ENCODE measurements at regions of chr3 and their contacts with region 1.

Region 1: GRCh38 chr3:32238453-32239306 is at the start of gene CMTM8:
- DNase-seq: peak; percentile 51
- H3K4me3 ChIP-seq: peak within 1 kb of the TSS; percentile 67 to 78 (median 70)
- H3K27ac ChIP-seq: no peak within 1 kb of the TSS
- H3K4me1 ChIP-seq: peaks cover 15% of the 10 kb centered on the region
- H3K27me3 ChIP-seq: no peaks in the 10 kb centered on the region
- CTCF ChIP-seq: no peak
- POLR2A ChIP-seq: no peak
- total RNA-seq, gene CMTM8: 7.3 and 8.1 TPM in 2 replicates

Region 2: GRCh38 chr3:31891974-31892373 is 346.7 kb before region 1 on chr3:
- CTCF ChIA-PET with region 1: no interaction called
- POLR2A ChIA-PET with region 1: no interaction called
- dilution Hi-C with region 1: no loop called
- intact Hi-C with region 1: no loop called
- DNase-seq: no peak
- H3K4me3 ChIP-seq: no peak overlapping the region
- H3K27ac ChIP-seq: no peak overlapping the region
- H3K4me1 ChIP-seq: no peaks in the 10 kb centered on the region
- H3K27me3 ChIP-seq: no peaks in the 10 kb centered on the region
- CTCF ChIP-seq: no peak
- POLR2A ChIP-seq: no peak

Region 3: GRCh38 chr3:32200490-32200889 is 38.2 kb before region 1 on chr3:
- CTCF ChIA-PET with region 1: interaction called, 15 read pairs
- POLR2A ChIA-PET with region 1: no interaction called
- dilution Hi-C with region 1: no loop called
- intact Hi-C with region 1: no loop called
- DNase-seq: peak; percentile 92
- H3K4me3 ChIP-seq: no peak overlapping the region
- H3K27ac ChIP-seq: no peak overlapping the region
- H3K4me1 ChIP-seq: peaks cover 15% of the 10 kb centered on the region
- H3K27me3 ChIP-seq: no peaks in the 10 kb centered on the region
- CTCF ChIP-seq: no peak
- POLR2A ChIP-seq: no peak

Region 4: DNA sequence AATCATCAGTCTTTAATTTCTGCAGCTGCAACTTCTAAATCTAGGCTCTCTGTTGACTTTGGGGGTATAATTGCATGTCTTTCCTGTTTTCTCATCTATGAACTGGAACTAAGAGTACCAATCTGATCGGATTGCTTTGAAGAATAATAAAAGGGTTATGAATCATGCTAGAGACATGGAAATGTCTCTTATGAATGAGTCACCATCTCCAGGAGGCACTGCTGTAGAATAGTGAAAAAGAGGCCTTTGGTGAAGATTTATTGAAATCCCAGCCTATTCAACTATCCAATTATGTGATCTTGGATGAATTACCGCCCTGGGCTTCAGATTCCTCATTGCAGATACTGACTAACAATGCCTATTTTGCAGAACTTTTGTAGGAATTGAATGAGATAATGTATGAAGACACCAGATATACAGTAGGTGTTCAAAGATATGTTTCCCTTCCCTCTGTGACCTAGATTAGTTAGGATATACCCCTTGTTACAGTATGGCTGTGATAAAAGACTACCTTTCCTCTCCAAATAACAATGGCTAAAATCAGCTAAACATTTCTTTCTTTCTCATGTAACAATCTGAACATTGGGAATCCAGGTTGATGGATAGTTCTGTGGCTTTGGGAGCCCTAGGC is 11.7 kb before region 1 on chr3:
- CTCF ChIA-PET with region 1: interaction called, 10 read pairs
- POLR2A ChIA-PET with region 1: no interaction called
- dilution Hi-C with region 1: no loop called
- intact Hi-C with region 1: loop called (anchors 1 kb)
- DNase-seq: peak; percentile 70
- H3K4me3 ChIP-seq: no peak overlapping the region
- H3K27ac ChIP-seq: peak overlapping the region; percentile 27
- H3K4me1 ChIP-seq: peaks cover 15% of the 10 kb centered on the region
- H3K27me3 ChIP-seq: no peaks in the 10 kb centered on the region
- CTCF ChIP-seq: no peak
- POLR2A ChIP-seq: peak; percentile 43

Region 5: DNA sequence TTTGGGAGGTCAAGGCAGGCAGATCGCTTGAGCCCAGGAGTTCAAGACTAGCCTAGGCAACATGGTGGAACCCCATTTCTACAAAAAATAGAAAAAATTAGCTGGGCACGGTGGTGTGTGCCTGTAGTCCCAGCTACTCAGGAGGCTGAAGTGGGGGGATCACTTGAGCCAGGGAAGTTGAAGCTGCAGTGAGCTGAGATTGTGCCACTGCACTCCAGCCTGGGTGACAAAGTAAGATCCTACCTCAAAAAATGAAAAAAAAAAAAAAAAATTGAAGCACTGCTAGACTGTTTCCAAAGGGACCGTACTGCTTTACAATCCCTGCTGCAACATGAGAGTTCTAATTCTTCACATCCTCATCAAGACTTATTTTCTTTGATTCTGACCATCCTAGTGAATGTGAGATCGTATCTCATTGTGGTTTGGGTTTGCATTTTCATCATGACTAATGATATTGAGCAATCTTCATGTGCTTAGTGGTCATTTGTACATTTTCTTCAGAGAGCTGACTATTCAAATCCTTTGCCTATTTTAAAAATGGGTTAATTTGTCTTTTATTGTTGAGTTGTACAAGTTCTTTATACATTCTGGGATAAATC is 10.6 kb after region 1 on chr3:
- CTCF ChIA-PET with region 1: interaction called, 7 read pairs
- POLR2A ChIA-PET with region 1: interaction called, 12 read pairs
- dilution Hi-C with region 1: no loop called
- intact Hi-C with region 1: no loop called
- DNase-seq: no peak
- H3K4me3 ChIP-seq: no peak overlapping the region
- H3K27ac ChIP-seq: no peak overlapping the region
- H3K4me1 ChIP-seq: peaks cover 15% of the 10 kb centered on the region
- H3K27me3 ChIP-seq: no peaks in the 10 kb centered on the region
- CTCF ChIP-seq: no peak
- POLR2A ChIP-seq: no peak

Region 6: GRCh38 chr3:32296256-32297204 is 57.9 kb after region 1 on chr3:
- CTCF ChIA-PET with region 1: interaction called, 18 read pairs
- POLR2A ChIA-PET with region 1: no interaction called
- dilution Hi-C with region 1: no loop called
- intact Hi-C with region 1: no loop called
- DNase-seq: peak; percentile 68
- H3K4me3 ChIP-seq: no peak overlapping the region
- H3K27ac ChIP-seq: no peak overlapping the region
- H3K4me1 ChIP-seq: peaks cover 3% of the 10 kb centered on the region
- H3K27me3 ChIP-seq: no peaks in the 10 kb centered on the region
- CTCF ChIP-seq: peak; percentile 80 to 86
- POLR2A ChIP-seq: no peak

Region 7: DNA sequence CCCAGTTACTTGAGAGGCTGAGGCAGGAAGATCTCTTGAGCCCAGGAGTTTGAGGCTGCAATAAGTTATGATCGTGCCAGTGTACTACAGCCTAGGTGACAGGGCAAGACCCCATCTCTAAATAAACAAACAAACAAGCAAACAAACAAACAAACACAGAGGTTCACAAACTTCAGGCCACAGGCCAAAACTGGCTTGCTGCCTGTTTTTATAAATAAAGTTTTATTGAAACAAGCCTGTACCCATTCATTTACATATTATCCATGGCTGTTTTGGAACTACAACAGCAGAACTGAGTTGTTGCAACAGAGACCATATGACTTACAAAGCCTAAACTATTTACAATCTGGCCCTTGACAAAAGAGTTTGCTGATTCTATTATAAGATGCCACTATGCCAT is 325.5 kb after region 1 on chr3:
- CTCF ChIA-PET with region 1: no interaction called
- POLR2A ChIA-PET with region 1: no interaction called
- dilution Hi-C with region 1: no loop called
- intact Hi-C with region 1: no loop called
- DNase-seq: no peak
- H3K4me3 ChIP-seq: no peak overlapping the region
- H3K27ac ChIP-seq: no peak overlapping the region
- H3K4me1 ChIP-seq: peaks cover 8% of the 10 kb centered on the region
- H3K27me3 ChIP-seq: no peaks in the 10 kb centered on the region
- CTCF ChIP-seq: no peak
- POLR2A ChIP-seq: no peak